ENCODE measurements at regions of chr11 and their contacts with region 1.

Region 1: GRCh38 chr11:119356349-119357031 is 10.0 kb upstream of the MFRP start:
- DNase-seq: peak; percentile 84
- ATAC-seq: peak; percentile 95
- H3K4me3 Mint-ChIP-seq: peak overlapping the region; percentile 77
- H3K27ac Mint-ChIP-seq: peak overlapping the region; percentile 60
- H3K4me1 Mint-ChIP-seq: peaks cover 25% of the 10 kb centered on the region
- H3K27me3 Mint-ChIP-seq: peaks cover 40% of the 10 kb centered on the region

Region 2: DNA sequence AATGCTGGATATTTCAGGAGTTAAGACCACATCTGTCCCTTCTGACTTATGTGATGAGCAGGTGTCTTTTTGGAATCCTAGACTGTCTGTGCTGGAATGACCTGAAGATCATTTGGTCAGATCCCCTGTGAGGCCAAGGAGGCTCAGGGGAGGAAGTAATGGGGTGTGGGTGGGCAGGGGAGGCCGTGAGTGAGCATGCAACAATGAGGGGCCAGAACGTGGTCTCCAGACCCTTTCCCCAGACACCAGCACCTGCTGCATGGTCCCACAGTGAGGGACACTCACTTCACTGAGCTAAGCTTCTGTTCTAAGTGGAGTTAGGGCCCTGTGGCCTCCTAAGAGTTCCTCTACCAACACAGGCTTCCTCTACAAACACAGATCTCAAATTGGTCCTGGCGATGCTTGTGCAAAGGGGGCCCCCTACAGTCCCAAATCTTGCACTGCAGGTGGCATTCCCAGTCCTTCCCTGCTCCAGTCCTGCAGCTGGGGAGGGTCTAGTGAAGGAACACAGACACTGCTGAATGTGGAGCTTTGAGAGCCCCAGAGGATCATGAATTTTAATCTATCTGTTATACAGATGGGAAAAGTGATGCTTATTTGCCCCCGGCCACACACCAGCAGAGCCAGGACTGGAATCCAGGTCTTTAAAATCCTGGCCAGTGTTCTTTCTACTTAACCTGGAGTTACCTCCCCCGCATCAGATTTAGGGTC is 17.6 kb after region 1 on chr11:
- CTCF ChIA-PET with region 1: interaction called, 318 read pairs
- DNase-seq: no peak
- ATAC-seq: peak; percentile 66
- H3K4me3 Mint-ChIP-seq: no peak overlapping the region
- H3K27ac Mint-ChIP-seq: peak overlapping the region; percentile 62
- H3K4me1 Mint-ChIP-seq: peaks cover 27% of the 10 kb centered on the region
- H3K27me3 Mint-ChIP-seq: peaks cover 4% of the 10 kb centered on the region

Region 3: GRCh38 chr11:119381181-119381988 is 24.9 kb after region 1 on chr11 and contains the start of gene USP2:
- CTCF ChIA-PET with region 1: interaction called, 318 read pairs
- DNase-seq: peak; percentile 96
- ATAC-seq: peak; percentile 98
- H3K4me3 Mint-ChIP-seq: no peak within 1 kb of the TSS
- H3K27ac Mint-ChIP-seq: no peak within 1 kb of the TSS
- H3K4me1 Mint-ChIP-seq: peaks cover 9% of the 10 kb centered on the region
- H3K27me3 Mint-ChIP-seq: peaks cover 7% of the 10 kb centered on the region
- total RNA-seq, gene USP2: 0.28 to 0.76 TPM

Region 4: DNA sequence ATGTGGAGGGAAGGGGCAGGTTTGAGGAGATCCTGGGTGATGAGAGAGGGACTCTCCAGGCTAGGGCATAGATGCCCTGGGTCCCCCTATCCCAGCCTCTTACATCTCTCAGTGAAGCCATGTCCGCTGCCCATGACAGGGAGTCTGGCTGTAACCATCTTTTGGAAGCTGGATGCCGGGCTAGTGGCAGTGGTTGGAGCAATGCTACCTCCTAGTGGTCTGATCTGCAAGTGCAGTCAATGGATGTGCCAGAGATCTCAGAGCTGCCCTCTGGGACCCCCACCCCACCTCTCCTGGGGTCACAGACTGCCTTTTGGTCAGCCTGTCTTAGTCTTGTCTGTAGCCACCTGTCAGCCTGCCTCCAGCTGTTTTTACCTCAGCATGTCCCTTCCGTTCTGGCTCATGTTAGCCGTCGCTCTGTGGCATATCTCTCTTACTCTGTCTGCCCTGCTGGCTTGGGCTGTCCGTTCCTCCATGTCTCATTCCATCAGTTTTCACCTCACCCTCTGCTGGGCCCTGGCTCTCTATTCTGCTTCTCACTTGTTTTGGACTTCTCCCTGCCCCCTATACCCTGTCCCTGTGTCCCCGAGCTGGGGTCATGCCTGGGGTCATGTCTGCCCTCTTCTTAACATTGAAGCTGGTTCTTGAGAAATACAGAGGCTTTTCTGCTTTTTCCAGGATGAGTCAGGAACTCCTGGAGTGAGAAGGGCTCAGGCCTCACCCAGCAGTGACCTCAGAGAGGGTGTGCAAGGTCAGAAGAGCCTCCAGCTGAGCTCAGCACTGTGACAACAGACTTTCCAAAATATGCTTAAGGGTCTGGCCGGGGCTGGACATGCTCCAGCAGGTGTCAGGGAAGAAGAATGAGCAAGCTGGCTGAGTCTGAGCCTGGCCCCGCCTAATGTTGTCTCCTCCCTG is 118.4 kb after region 1 on chr11:
- CTCF ChIA-PET with region 1: interaction called, 105 read pairs
- DNase-seq: peak; percentile 68
- ATAC-seq: peak; percentile 67
- H3K4me3 Mint-ChIP-seq: no peak overlapping the region
- H3K27ac Mint-ChIP-seq: no peak overlapping the region
- H3K4me1 Mint-ChIP-seq: no peaks in the 10 kb centered on the region
- H3K27me3 Mint-ChIP-seq: peaks cover 9% of the 10 kb centered on the region

Measured in activated CD8-positive, alpha-beta memory T cell treated with anti-CD3 and anti-CD28 coated beads, Interleukin-2, amount 10 ng/mL, durations not matched to agents 7 days and 5 days (primary cell).